ENCODE measurements at regions of chr17 and their contacts with region 1.

Region 1: DNA sequence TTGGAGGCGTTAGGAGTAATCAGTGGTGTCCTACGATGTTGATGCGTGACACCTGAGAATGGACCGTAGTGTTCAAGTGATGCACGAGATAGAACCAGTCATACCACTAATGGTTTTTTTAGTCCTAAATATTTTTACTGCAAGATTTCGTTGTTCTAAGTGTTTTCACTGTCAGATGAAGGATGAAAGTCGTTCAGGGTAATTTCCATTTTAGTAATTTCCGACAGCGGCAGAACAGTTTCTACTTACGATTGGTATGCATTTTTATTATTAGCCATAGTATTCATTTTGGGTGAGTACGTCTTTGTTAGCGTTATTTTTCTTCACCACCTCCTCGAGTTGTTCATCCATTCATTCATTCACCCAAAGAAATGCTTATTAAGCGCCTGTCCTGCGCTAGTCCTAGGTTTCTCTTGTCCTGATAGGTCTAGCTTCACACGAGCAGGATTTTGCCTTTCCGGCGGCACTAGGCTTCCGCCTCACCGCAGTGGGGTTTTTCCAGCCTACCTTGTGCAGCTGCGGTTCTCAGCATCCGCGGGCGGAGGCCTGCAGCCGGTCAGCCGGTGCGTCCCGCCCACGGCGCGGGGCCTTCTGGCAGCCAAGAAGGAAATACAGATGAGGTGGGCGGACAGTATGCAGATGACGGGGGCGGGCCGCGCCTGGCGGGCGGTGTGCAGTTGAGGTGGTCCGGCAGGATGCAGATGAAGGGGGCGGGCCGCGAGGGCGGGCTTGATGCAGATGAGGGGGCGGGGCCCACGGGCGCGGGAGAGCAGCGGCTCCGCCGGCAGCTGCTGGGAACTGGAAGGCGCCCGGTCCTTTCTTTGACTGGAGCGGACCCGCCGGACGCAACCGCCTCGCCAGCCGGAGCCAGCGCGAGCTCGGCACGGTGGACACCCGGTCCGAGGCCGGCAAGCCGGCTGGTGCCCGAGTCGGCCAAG is 146.4 kb downstream of the SPECC1 start:
- DNase-seq: peak; percentile 98
- H3K4me3 Mint-ChIP-seq: no peak overlapping the region
- H3K27ac Mint-ChIP-seq: no peak overlapping the region
- H3K4me1 Mint-ChIP-seq: peaks cover 7% of the 10 kb centered on the region
- H3K27me3 Mint-ChIP-seq: peaks cover 8% of the 10 kb centered on the region

Region 2: DNA sequence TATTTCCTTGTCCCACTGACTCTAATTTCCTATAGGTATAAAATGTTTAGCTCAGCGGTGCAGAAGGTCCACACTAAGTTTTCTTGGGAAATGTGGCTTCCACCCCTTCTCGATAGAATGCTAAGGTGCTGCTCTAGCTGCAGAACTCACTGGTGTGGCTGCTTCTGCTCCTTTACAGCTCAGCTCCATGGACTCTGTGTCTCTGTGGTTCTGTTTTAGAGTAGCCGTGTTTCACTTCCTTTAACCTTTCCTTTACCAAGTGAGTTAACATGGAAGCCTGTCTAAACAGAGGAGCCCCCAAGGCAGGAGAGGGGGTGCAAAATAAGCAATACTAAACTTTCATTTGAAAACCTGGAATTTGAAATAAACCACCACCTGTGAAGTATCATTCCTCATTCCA is 81.0 kb before region 1 on chr17:
- CTCF ChIA-PET with region 1: no interaction called
- intact Hi-C with region 1: no loop called
- DNase-seq: no peak
- H3K4me3 Mint-ChIP-seq: no peak overlapping the region
- H3K27ac Mint-ChIP-seq: no peak overlapping the region
- H3K4me1 Mint-ChIP-seq: peaks cover 20% of the 10 kb centered on the region
- H3K27me3 Mint-ChIP-seq: peaks cover 2% of the 10 kb centered on the region

Region 3: DNA sequence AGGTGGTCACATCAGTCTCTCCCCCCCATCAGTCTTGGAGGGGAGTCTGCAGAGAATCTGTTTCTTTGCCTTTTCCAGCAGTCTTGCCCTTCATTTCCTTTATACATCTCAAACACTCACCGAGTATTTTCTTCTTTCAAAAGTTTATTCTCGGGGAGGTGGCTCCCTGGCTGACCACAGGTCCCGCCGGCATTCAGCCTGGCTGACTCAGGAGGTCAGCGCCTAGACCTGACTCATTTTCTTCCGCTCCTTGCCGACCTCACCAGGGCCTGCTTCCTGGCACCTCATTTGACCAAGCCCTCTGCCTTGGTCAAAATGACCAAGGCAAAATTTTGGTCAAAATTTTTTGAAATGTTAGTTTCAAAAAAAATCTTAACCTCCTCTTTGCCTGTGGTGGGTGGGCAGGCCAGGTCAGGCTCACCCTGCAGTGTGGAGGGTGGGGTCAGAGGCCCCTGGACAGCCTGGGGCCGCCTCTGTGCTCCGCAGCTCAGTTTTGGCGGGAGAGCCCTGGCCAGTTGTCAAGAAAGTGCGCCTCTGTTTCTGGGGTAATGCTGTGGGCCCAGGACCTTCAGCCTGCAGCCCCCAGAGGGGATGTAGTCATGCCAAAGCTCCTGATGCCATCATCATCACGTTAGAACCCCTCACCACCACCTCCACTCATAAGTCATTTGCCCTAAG is 19.2 kb after region 1 on chr17:
- CTCF ChIA-PET with region 1: no interaction called
- intact Hi-C with region 1: no loop called
- DNase-seq: no peak
- H3K4me3 Mint-ChIP-seq: no peak overlapping the region
- H3K27ac Mint-ChIP-seq: no peak overlapping the region
- H3K4me1 Mint-ChIP-seq: no peaks in the 10 kb centered on the region
- H3K27me3 Mint-ChIP-seq: no peaks in the 10 kb centered on the region

Region 4: GRCh38 chr17:20184977-20185619 is 29.6 kb after region 1 on chr17:
- CTCF ChIA-PET with region 1: no interaction called
- intact Hi-C with region 1: no loop called
- DNase-seq: no peak
- H3K4me3 Mint-ChIP-seq: no peak overlapping the region
- H3K27ac Mint-ChIP-seq: no peak overlapping the region
- H3K4me1 Mint-ChIP-seq: peaks cover 3% of the 10 kb centered on the region
- H3K27me3 Mint-ChIP-seq: no peaks in the 10 kb centered on the region

Region 5: GRCh38 chr17:20206068-20206467 is 50.5 kb after region 1 on chr17:
- CTCF ChIA-PET with region 1: no interaction called
- intact Hi-C with region 1: loop called (anchors 1 kb)
- DNase-seq: peak; percentile 77
- H3K4me3 Mint-ChIP-seq: no peak overlapping the region
- H3K27ac Mint-ChIP-seq: no peak overlapping the region
- H3K4me1 Mint-ChIP-seq: peaks cover 28% of the 10 kb centered on the region
- H3K27me3 Mint-ChIP-seq: no peaks in the 10 kb centered on the region

Region 6: GRCh38 chr17:20234276-20234675 is 78.7 kb after region 1 on chr17:
- CTCF ChIA-PET with region 1: interaction called, 3 read pairs
- intact Hi-C with region 1: loop called (anchors 5 kb)
- DNase-seq: peak; percentile 92
- H3K4me3 Mint-ChIP-seq: peak overlapping the region; percentile 5
- H3K27ac Mint-ChIP-seq: peak overlapping the region; percentile 82
- H3K4me1 Mint-ChIP-seq: peaks cover 38% of the 10 kb centered on the region
- H3K27me3 Mint-ChIP-seq: no peaks in the 10 kb centered on the region